RWPE1 (cell line): ENCODE measurements at regions of chr4 and their contacts with region 1.

Region 1: GRCh38 chr4:147096667-147097604 is 151.3 kb upstream of the TTC29 start:
- DNase-seq: peak; percentile 42
- H3K27ac ChIP-seq: no peak overlapping the region
- CTCF ChIP-seq: peak; percentile 67

Region 2: GRCh38 chr4:147019061-147019460 is 77.9 kb before region 1 on chr4:
- CTCF ChIA-PET with region 1: interaction called, 35 read pairs
- POLR2A ChIA-PET with region 1: no interaction called
- DNase-seq: peak; percentile 34
- H3K27ac ChIP-seq: no peak overlapping the region
- CTCF ChIP-seq: peak; percentile 56